ENCODE measurements at regions of chrX and their contacts with region 1.

Region 1: DNA sequence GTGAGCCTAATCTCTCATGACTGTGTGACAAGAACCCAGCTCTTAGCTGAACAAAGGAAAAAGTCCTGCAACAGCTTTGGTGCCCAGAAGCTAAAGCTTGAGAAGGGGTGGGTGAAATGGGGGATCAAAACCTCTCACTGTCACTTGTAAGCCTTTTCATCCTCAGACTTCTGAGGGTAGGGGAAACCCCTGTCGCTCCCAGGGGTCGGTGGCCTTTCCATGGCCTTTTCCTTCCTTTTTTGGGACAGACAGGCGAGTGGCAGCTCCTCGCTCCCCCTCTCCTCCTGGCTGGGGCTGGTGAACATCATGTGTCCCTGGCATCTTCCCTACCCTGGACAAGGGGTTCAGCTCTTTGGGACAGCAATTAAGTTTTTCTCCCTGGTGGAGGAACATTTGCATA is 78.2 kb downstream of the FAM47A start:
- DNase-seq: no peak
- H3K4me3 ChIP-seq: no peak overlapping the region
- H3K27ac ChIP-seq: no peak overlapping the region
- H3K4me1 ChIP-seq: peaks cover 0 to 6% (median 0%) of the 10 kb centered on the region in 4 donors
- H3K27me3 ChIP-seq: no peaks in the 10 kb centered on the region
- CTCF ChIP-seq: no peak

Region 2: GRCh38 chrX:34028488-34028887 is 25.4 kb before region 1 on chrX:
- intact Hi-C with region 1: loop called (anchors 2 kb)
- DNase-seq: no peak
- H3K4me3 ChIP-seq: no peak overlapping the region
- H3K27ac ChIP-seq: no peak overlapping the region
- H3K4me1 ChIP-seq: no peaks in the 10 kb centered on the region
- H3K27me3 ChIP-seq: no peaks in the 10 kb centered on the region
- CTCF ChIP-seq: no peak